Cardiac septum (tissue), 1 donor: ENCODE measurements at regions of chr3 and their contacts with region 1.

Region 1: DNA sequence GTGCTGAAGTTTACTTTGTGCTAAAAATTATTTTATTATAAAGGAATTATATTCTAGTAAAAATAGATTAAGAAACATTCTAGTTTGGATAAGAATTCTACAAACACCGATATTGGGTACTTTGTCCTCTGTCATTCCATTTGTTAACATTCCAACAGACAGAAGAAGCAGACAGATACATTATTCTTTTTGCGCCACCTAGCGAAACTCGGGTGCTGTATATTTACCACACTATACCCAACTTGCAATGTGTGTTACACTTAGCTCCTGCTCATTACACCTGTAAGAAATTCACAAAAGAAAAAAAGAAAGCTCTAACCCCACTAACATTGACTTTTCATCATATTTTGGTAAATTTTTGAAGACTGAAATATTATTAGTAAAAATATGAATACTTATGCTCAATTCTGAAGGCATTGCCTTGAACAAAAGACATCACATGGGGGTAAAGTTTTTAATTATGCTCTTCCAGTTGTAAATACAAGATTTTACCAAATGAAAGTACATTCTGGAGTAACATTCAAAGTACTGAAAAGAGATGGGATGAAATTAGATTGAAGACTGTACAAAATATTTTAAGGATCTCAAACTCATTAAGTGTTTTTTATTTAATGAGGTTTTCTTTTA is 136.5 kb upstream of the MLF1 start:
- DNase-seq: no peak

Region 2: GRCh38 chr3:157618075-157618760 is 816.3 kb before region 1 on chr3:
- intact Hi-C with region 1: loop called (anchors 5 kb)
- DNase-seq: no peak

Region 3: DNA sequence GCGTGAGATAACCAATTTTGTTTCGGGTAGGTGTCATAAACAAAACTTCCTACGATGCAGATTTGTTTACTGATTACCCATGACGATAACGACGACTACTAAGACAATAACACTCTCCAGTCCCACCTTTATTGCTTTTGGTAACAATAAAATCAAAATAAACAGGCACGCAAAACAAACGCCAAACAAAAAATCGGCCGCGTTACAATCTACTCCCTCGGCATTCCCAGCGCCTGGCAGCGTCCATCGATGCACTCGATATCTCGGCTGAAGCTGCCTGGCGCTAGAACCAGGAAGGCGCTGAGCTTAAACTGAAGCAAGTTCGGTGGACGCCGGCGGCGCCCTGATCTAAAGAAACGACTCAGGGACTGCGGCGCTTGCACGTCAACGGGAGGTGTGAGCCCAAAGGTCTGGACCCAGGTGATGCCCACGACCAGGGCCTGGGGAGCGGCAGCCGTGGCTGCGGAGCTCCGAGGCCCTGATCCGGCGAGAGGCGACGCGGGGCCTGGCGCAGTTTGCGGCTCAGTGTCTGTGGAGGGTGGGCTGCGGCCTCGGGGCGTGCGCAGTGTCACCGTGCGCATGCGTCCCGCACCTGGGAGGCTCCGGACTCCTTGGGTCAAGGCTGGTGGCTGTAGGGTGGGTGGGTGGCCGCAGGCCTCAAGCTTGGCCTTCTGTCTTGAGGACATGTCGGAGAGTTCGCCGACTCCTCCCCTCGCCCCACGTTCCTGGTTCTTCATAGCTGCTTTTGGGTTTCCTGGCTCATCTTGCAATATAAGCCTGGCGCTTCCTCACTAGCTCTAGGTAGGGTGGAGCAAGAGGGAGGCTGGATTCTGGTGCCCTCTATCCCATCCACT is 324.5 kb before region 1 on chr3 and contains the start of gene RSRC1:
- intact Hi-C with region 1: loop called (anchors 10 kb)
- DNase-seq: peak; percentile 94
- total RNA-seq, gene RSRC1: 21.4 TPM